Left ventricle myocardium superior (tissue), 1 donor: ENCODE measurements at regions of chr10 and their contacts with region 1.

Region 1: DNA sequence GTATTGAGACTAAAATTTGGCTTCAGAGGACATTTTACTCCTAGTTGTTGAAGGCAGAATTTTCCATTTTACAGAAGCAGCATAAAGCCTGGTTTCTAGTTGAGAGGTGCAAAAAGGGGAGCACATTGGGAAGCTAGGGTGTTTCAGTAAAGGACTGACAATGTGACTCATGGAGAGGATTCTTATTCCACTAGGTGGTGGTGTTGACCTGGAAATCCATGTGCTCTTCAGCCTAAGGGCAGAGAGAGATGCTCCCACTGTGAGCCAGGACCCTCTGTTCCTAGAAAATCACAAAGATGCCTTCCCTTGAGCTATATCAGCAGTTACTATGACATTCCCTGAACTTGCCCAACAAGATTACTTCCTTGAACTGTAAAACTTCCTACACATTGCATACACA is 687.8 kb downstream of the IPMK start:
- DNase-seq: no peak
- ATAC-seq: peak; percentile 52

Region 2: DNA sequence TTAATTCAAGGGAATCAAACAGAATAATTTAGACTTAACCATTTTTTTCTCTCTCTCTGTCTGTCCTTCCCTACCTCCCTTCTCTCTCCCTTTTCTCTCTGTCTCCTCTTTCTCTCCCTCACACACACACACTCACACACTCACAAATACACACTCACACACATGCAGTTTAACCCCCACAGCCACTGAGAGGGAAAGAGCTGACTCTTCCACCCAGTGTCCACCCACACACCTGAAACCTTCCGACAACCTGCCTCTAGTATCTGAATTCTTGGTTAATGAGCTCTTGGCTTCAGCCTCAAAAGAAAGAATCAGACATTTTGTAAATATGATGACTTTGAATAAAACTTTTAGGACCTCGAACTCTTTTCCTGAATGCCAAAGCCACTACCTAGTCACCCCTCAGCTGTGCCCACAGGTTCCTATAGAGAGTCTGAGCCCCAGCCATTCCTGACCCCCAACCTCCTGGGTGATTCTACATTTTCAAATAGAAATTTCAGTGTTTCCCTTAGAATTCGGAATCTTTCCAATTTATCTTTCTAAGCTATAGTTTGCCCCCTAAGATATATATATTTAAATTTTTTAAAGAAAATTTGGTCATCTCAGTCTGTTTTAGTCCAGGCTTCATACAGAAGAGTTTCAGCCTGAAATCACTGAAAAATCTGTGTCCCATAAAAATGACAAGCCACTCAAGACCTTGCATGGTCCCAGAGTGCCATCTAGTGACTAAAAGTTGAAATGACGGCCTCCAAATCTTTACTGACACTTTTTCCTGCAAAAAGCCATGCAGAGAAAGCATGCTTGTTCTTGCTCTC is 485.0 kb after region 1 on chr10:
- intact Hi-C with region 1: loop called (anchors 5 kb)
- DNase-seq: no peak
- ATAC-seq: no peak

Region 3: GRCh38 chr10:58152673-58153263 is 572.8 kb after region 1 on chr10:
- intact Hi-C with region 1: loop called (anchors 5 kb)
- DNase-seq: peak; percentile 25
- ATAC-seq: no peak